Heart right ventricle (tissue), 16 donors: ENCODE measurements at regions of chrX and their contacts with region 1.

Region 1: DNA sequence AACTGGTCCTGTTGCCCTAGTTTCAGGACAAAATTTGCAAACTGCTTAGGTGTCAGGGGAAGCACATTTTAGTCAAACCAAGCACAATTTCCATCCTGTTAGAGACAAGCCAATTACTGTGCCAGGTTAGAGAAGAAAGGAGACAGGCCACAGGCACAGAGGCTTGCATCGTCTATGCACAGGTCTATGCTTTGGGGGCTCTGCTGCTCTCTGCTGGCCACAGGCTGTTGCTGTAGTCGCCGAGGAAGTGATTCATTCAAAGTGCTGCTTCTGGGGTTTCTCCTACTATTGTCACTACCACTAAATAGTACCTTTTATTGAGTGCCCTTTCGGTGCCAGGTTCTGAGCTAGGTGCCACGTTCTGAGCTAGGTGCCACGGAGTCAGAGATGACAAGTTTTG is 45.5 kb downstream of the VGLL1 start:
- DNase-seq: peak; percentile 29 to 38
- ATAC-seq: peak in 7 of 8 donors; percentile 61 to 92 (median 82)
- H3K4me3 ChIP-seq: no peak overlapping the region
- H3K27ac ChIP-seq: no peak overlapping the region
- H3K4me1 ChIP-seq: peaks cover 0 to 11% (median 4%) of the 10 kb centered on the region in 9 donors
- H3K27me3 ChIP-seq: peaks cover 0 to 19% (median 0%) of the 10 kb centered on the region in 7 donors
- CTCF ChIP-seq: peak; percentile 22 to 70 (median 64)

Region 2: DNA sequence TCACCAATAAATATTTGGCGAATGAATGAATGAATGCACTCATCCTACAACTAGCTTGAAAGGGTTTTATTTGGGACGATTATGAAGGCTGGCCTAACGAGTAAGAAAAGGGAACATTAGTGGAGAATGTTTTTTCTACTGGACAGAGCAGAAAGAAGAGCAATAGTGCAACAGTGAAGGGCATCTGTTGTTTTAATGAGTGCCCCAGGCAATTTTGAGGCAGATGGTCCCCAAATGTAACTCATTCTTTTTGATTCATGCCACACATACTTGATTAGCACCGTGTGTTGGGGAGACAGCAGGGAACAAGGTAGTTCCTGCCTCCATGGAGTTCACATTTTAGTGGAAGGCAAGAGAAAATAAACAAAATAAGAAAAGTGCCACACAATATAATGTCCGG is 1079.8 kb before region 1 on chrX:
- intact Hi-C with region 1: no loop called
- DNase-seq: no peak
- ATAC-seq: no peak
- H3K4me3 ChIP-seq: no peak overlapping the region
- H3K27ac ChIP-seq: no peak overlapping the region
- H3K4me1 ChIP-seq: no peaks in the 10 kb centered on the region
- H3K27me3 ChIP-seq: peaks cover 0 to 28% (median 0%) of the 10 kb centered on the region in 7 donors
- CTCF ChIP-seq: no peak

Region 3: GRCh38 chrX:136268051-136269048 is 309.2 kb before region 1 on chrX:
- intact Hi-C with region 1: loop called in 2 of 10 experiments (anchors 10 kb)
- DNase-seq: peak in 1 of 2 donors; percentile 40
- ATAC-seq: peak in 6 of 8 donors; percentile 33 to 65 (median 53)
- H3K4me3 ChIP-seq: no peak overlapping the region
- H3K27ac ChIP-seq: no peak overlapping the region
- H3K4me1 ChIP-seq: no peaks in the 10 kb centered on the region
- H3K27me3 ChIP-seq: peaks cover 0 to 20% (median 0%) of the 10 kb centered on the region in 7 donors
- CTCF ChIP-seq: peak; percentile 47 to 86 (median 68)

Region 4: GRCh38 chrX:136397001-136397400 is 180.6 kb before region 1 on chrX:
- intact Hi-C with region 1: loop called in 1 of 10 experiments (anchors 5 kb)
- DNase-seq: no peak
- ATAC-seq: no peak
- H3K4me3 ChIP-seq: no peak overlapping the region
- H3K27ac ChIP-seq: no peak overlapping the region
- H3K4me1 ChIP-seq: no peaks in the 10 kb centered on the region
- H3K27me3 ChIP-seq: peaks cover 0 to 10% (median 0%) of the 10 kb centered on the region in 7 donors
- CTCF ChIP-seq: peak in 1 of 9 donors; percentile 7

Region 5: GRCh38 chrX:136496770-136497598 is 80.6 kb before region 1 on chrX and contains the start of gene HTATSF1:
- intact Hi-C with region 1: loop called in 2 of 10 experiments (anchors 2 to 5 kb)
- DNase-seq: peak; percentile 82 to 86
- ATAC-seq: peak; percentile 92 to 97 (median 94)
- H3K4me3 ChIP-seq: peak within 1 kb of the TSS; percentile 37 to 86 (median 74)
- H3K27ac ChIP-seq: peak within 1 kb of the TSS; percentile 86 to 98 (median 94)
- H3K4me1 ChIP-seq: peaks cover 0 to 22% (median 11%) of the 10 kb centered on the region in 9 donors
- H3K27me3 ChIP-seq: peaks cover 0 to 18% (median 0%) of the 10 kb centered on the region in 7 donors
- CTCF ChIP-seq: no peak
- total RNA-seq, gene HTATSF1: 55.0 to 77.8 (median 62.9) TPM

Region 6: GRCh38 chrX:136525738-136526606 is 51.6 kb before region 1 on chrX:
- intact Hi-C with region 1: loop called in 2 of 10 experiments (anchors 2 kb)
- DNase-seq: peak; percentile 49 to 75
- ATAC-seq: peak; percentile 92 to 99 (median 98)
- H3K4me3 ChIP-seq: no peak overlapping the region
- H3K27ac ChIP-seq: peak overlapping the region in 9 of 10 donors; percentile 1 to 85 (median 73)
- H3K4me1 ChIP-seq: peaks cover 0 to 13% (median 7%) of the 10 kb centered on the region in 9 donors
- H3K27me3 ChIP-seq: peaks cover 0 to 4% (median 0%) of the 10 kb centered on the region in 7 donors
- CTCF ChIP-seq: no peak